Activated CD4-positive, alpha-beta T cell treated with anti-CD3 and anti-CD28 coated beads for 36 hours (primary cell): ENCODE measurements at regions of chr6 and their contacts with region 1.

Region 1: GRCh38 chr6:53986165-53986720 is 125.0 kb upstream of the MLIP start:
- DNase-seq: peak; percentile 48
- ATAC-seq: no peak
- H3K4me3 Mint-ChIP-seq: no peak overlapping the region
- H3K27ac Mint-ChIP-seq: no peak overlapping the region
- H3K4me1 Mint-ChIP-seq: no peaks in the 10 kb centered on the region
- H3K27me3 Mint-ChIP-seq: peaks cover 6% of the 10 kb centered on the region

Region 2: GRCh38 chr6:54267798-54268197 is 281.6 kb after region 1 on chr6:
- CTCF ChIA-PET with region 1: no interaction called
- POLR2A ChIA-PET with region 1: no interaction called
- intact Hi-C with region 1: loop called (anchors 5 to 10 kb)
- DNase-seq: no peak
- ATAC-seq: no peak
- H3K4me3 Mint-ChIP-seq: no peak overlapping the region
- H3K27ac Mint-ChIP-seq: no peak overlapping the region
- H3K4me1 Mint-ChIP-seq: no peaks in the 10 kb centered on the region
- H3K27me3 Mint-ChIP-seq: peaks cover 3% of the 10 kb centered on the region

Region 3: DNA sequence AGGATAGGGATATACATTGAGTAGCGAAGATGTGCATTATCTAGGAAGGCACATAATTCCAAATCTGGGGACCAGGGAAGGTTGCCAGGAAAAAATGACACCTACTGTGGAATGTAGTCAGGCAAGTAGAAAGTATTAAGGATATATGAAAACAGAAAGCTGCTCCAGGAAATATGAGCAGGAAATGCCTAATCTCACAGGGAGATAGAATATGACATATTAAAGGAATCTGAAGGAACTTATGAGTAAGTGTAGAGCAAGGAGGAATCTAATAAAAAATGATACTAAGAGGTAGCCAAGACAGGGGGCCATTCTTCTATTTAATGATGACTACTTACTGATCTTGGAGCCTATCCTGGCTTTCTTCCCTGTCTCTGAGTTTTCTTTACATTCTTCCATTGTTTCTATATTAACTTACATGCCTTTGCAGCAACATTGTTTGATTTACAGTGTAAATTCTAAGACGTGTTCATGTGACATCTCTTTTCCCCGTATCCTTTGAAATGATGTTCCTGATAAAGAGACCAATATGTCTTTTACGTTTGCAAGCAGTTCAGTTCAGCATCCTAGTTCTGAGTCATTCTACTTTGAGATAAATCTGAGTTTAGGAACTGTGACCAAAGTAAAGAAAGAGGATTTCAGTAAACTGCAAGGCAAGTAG is 380.6 kb after region 1 on chr6:
- CTCF ChIA-PET with region 1: no interaction called
- POLR2A ChIA-PET with region 1: no interaction called
- intact Hi-C with region 1: no loop called
- DNase-seq: no peak
- ATAC-seq: no peak
- H3K4me3 Mint-ChIP-seq: no peak overlapping the region
- H3K27ac Mint-ChIP-seq: no peak overlapping the region
- H3K4me1 Mint-ChIP-seq: no peaks in the 10 kb centered on the region
- H3K27me3 Mint-ChIP-seq: no peaks in the 10 kb centered on the region

Region 4: DNA sequence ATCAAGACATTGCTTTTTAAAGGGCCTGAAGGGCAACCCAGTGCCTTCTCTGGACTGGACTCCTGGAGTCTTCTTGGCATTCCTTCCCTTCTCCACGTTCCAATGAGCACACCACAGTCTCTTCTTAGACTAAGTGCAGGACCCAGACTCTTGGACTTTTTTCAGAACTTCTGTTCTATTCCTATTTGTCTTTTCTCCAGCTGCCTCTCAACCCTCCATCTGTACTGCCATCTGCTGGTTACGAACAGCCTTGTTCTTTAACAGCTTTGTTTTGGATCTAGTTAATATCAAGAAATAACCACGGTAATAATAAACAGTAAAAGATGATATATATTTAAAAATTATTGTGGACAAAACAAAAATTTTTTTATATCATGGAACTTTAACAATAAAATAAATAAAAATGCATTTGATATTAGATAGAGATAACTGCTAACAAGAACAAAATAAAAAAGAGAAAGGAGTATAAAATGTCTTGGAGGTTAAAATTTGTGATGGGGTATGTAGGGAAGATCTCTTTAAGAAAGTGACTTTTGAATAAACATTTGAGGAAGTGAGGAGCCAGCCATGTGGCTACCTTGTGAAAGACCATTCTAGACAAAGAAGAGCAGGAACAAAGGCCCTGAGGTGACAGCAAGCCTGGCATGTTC is 1083.0 kb after region 1 on chr6:
- CTCF ChIA-PET with region 1: no interaction called
- POLR2A ChIA-PET with region 1: no interaction called
- intact Hi-C with region 1: loop called (anchors 5 to 10 kb)
- DNase-seq: peak; percentile 15
- ATAC-seq: no peak
- H3K4me3 Mint-ChIP-seq: no peak overlapping the region
- H3K27ac Mint-ChIP-seq: no peak overlapping the region
- H3K4me1 Mint-ChIP-seq: no peaks in the 10 kb centered on the region
- H3K27me3 Mint-ChIP-seq: no peaks in the 10 kb centered on the region